B cell (primary cell): ENCODE measurements at regions of chr6 and their contacts with region 1.

Region 1: GRCh38 chr6:157063176-157063903 is 260.0 kb downstream of the TMEM242 start:
- DNase-seq: no peak
- ATAC-seq: no peak
- H3K4me3 ChIP-seq: no peak overlapping the region
- H3K4me3 Mint-ChIP-seq: no peak overlapping the region
- H3K27ac ChIP-seq: no peak overlapping the region
- H3K27ac Mint-ChIP-seq: no peak overlapping the region
- H3K4me1 ChIP-seq: peaks cover 31% of the 10 kb centered on the region in 2 donors
- H3K4me1 Mint-ChIP-seq: peaks cover 63% of the 10 kb centered on the region
- H3K27me3 ChIP-seq: no peaks in the 10 kb centered on the region
- H3K27me3 Mint-ChIP-seq: no peaks in the 10 kb centered on the region
- CTCF ChIP-seq: no peak

Region 2: GRCh38 chr6:157107915-157108651 is 44.7 kb after region 1 on chr6:
- CTCF ChIA-PET with region 1: no interaction called
- POLR2A ChIA-PET with region 1: interaction called, 10 read pairs
- intact Hi-C with region 1: no loop called
- DNase-seq: no peak
- ATAC-seq: no peak
- H3K4me3 ChIP-seq: no peak overlapping the region
- H3K4me3 Mint-ChIP-seq: no peak overlapping the region
- H3K27ac ChIP-seq: no peak overlapping the region
- H3K27ac Mint-ChIP-seq: no peak overlapping the region
- H3K4me1 ChIP-seq: peaks cover 11 to 12% of the 10 kb centered on the region in 2 donors
- H3K4me1 Mint-ChIP-seq: peaks cover 34% of the 10 kb centered on the region
- H3K27me3 ChIP-seq: no peaks in the 10 kb centered on the region
- H3K27me3 Mint-ChIP-seq: no peaks in the 10 kb centered on the region
- CTCF ChIP-seq: no peak

Region 3: DNA sequence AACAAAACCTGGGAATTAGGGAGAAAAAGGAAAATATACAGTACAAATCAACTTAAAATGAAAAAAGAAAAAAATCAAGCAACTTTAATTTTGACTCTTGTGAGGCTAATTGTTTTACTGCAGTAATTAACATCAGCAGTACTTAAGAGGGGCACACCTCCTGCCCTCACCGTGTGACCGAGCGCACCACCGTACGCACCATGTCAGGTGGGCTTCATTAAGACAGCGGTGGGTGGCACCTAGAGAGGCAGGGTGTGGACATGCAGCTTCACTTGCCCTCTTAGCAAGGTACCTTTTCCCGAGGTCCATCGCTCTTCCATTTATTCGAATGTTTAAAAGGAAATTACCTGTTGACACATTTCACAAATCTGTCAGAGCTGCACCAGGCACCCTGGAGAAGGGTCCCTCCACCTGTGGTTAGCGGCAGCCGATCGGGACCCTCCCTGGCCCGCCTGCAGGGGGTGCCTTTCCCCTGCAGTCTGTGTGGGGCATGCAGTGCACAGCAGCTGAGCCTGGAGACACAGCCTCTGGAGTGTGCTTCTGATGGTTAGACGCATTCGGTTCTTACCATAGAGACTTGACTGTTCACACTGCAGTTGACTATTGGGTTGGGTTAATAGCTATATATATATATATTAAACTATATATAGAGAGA is 75.8 kb after region 1 on chr6:
- CTCF ChIA-PET with region 1: no interaction called
- POLR2A ChIA-PET with region 1: no interaction called
- intact Hi-C with region 1: no loop called
- DNase-seq: no peak
- ATAC-seq: no peak
- H3K4me3 ChIP-seq: no peak overlapping the region
- H3K4me3 Mint-ChIP-seq: no peak overlapping the region
- H3K27ac ChIP-seq: no peak overlapping the region
- H3K27ac Mint-ChIP-seq: no peak overlapping the region
- H3K4me1 ChIP-seq: no peaks in the 10 kb centered on the region
- H3K4me1 Mint-ChIP-seq: no peaks in the 10 kb centered on the region
- H3K27me3 ChIP-seq: no peaks in the 10 kb centered on the region
- H3K27me3 Mint-ChIP-seq: no peaks in the 10 kb centered on the region
- CTCF ChIP-seq: no peak